Caco-2 (cell line): ENCODE measurements at regions of chr17 and their contacts with region 1.

Region 1: DNA sequence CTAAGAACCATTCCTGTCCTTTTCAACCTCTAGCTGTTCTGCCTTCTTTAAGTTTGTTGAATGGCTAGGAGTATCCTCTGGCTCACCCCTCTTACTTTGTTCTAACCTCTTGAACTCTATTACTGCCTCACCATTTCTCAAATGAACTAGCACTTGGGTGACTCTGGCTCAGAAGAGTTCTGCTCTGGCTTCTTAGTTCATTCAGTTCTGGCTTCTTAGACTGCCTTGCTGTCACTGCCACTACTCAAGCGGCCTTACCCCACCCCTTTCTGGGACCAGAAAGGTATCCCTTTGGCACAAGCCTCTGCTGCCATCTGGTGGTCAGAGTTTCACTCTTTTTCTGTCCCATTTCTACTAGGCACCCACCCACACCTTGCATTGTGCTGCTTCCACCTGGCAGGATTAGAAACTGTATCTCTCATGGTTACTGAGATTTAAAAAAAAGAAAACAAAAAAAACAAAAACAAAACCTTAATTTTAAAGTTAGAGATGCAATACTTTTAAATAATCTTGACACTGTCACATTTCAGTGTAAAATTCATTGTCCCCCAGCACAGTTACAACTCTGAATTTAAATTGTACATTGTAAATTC is 6.8 kb upstream of the ABCA10 start:
- DNase-seq: peak; percentile 89 to 92
- H3K4me3 ChIP-seq: no peak overlapping the region
- H3K4me3 Mint-ChIP-seq: no peak overlapping the region
- H3K27ac Mint-ChIP-seq: no peak overlapping the region
- H3K4me1 ChIP-seq: peaks cover 5% of the 10 kb centered on the region
- H3K4me1 Mint-ChIP-seq: peaks cover 6% of the 10 kb centered on the region
- H3K27me3 ChIP-seq: no peaks in the 10 kb centered on the region
- H3K27me3 Mint-ChIP-seq: no peaks in the 10 kb centered on the region
- CTCF ChIP-seq: peak; percentile 86 to 89

Region 2: GRCh38 chr17:68972119-68972704 is 263.2 kb before region 1 on chr17:
- CTCF ChIA-PET with region 1: no interaction called
- POLR2A ChIA-PET with region 1: no interaction called
- intact Hi-C with region 1: loop called (anchors 1 kb)
- DNase-seq: peak in 1 of 2 experiments; percentile 49
- H3K4me3 ChIP-seq: no peak overlapping the region
- H3K4me3 Mint-ChIP-seq: no peak overlapping the region
- H3K27ac Mint-ChIP-seq: no peak overlapping the region
- H3K4me1 ChIP-seq: no peaks in the 10 kb centered on the region
- H3K4me1 Mint-ChIP-seq: no peaks in the 10 kb centered on the region
- H3K27me3 ChIP-seq: no peaks in the 10 kb centered on the region
- H3K27me3 Mint-ChIP-seq: no peaks in the 10 kb centered on the region
- CTCF ChIP-seq: peak; percentile 60 to 72

Region 3: GRCh38 chr17:69188065-69188464 is 47.4 kb before region 1 on chr17:
- CTCF ChIA-PET with region 1: no interaction called
- POLR2A ChIA-PET with region 1: no interaction called
- intact Hi-C with region 1: no loop called
- DNase-seq: no peak
- H3K4me3 ChIP-seq: no peak overlapping the region
- H3K4me3 Mint-ChIP-seq: no peak overlapping the region
- H3K27ac Mint-ChIP-seq: no peak overlapping the region
- H3K4me1 ChIP-seq: no peaks in the 10 kb centered on the region
- H3K4me1 Mint-ChIP-seq: no peaks in the 10 kb centered on the region
- H3K27me3 ChIP-seq: no peaks in the 10 kb centered on the region
- H3K27me3 Mint-ChIP-seq: no peaks in the 10 kb centered on the region
- CTCF ChIP-seq: no peak